HepG2 (cell line): ENCODE measurements at regions of chrX and their contacts with region 1.

Region 1: DNA sequence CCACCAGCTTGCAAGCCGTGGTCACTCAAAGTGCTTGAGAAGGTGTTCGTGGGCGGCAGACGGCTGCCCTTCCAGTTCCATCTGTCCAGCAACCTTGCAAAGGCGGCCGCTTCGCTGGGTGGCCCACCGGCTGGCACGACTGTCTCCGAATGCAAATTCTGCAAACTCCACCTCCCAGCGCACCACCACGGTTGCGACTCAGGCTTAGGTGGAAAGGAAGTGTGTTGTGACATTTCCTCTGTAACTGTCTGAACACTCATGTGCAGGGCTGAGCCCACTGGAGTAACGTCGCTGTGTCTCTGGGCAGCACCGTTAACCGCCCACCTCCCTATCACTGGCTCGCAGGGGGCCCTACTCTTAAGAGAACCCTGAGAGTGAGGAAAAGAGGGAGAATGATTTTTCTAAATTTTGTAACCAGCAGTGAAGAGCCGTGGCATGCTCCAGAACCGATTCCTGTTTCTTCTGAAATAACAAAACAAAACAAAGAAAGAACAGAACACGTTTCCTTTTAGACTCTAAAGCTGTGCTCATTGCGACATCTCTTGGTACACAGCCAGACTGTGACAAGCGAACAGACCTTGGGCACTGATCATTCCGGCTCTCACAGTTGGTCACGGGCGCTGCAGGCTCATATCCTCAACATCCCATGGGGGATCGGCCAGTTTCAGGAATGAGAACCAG is at the start of gene P2RY8:
- DNase-seq: peak; percentile 84
- ATAC-seq: peak; percentile 83
- H3K4me3 ChIP-seq: peak within 1 kb of the TSS; percentile 62 to 81 (median 63)
- H3K27ac ChIP-seq: peak within 1 kb of the TSS; percentile 75
- H3K4me1 ChIP-seq: peaks cover 51% of the 10 kb centered on the region
- H3K27me3 ChIP-seq: no peaks in the 10 kb centered on the region
- CTCF ChIP-seq: peak; percentile 56
- EP300 ChIP-seq: no peak
- POLR2A ChIP-seq: no peak
- RAD21 ChIP-seq: no peak
- total RNA-seq, gene P2RY8: 0.66 and 1.0 TPM in 2 replicates

Region 2: DNA sequence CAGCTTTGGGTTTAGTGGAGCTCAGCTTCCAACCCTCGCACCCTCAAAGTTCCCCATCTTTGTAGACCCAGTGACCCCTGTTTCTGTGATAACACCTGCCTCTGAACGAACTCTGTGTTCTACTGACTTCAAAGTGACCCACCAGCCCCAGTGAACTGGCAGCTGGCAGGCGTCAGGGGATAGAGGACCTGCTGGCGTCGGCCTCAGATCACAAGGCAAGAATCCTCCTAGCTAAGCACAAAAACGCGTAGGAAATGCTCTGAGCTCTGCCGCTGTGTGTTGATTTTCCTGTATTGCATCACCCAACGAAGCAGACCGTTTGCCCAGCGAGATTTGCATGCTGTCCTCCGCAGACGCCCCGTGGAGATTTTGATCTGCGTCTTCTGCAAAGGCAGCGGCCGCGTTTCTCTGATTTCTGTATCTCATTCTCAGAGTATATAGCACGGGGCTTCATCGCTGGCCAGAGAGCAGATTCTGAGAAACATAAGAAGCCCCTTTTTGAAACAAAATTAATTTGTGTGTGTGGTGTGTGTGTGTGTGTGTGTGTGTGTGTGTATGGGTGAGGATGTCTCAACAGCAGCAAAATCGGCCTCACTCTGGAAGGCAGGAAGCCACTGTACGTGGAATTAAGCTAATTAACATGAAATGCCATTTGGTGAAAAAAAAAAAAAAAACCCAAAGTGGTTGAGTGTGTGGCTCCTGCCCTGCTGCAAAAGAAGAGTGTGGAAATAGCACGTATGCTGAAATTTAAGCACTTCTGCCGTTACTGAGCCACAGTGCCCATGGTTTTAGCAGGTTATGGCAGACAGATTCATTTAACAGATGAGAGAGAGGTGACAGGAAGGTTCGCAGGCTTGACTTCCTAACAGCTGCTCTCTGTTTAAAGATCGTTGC is 55.3 kb before region 1 on chrX:
- CTCF ChIA-PET with region 1: no interaction called
- POLR2A ChIA-PET with region 1: no interaction called
- in situ Hi-C with region 1: no loop called
- intact Hi-C with region 1: loop called (anchors 1 kb)
- DNase-seq: peak; percentile 95
- ATAC-seq: peak; percentile 97
- H3K4me3 ChIP-seq: peak overlapping the region; percentile 46 to 56 (median 48)
- H3K27ac ChIP-seq: peak overlapping the region; percentile 60
- H3K4me1 ChIP-seq: peaks cover 30% of the 10 kb centered on the region
- H3K27me3 ChIP-seq: no peaks in the 10 kb centered on the region
- CTCF ChIP-seq: peak; percentile 34
- EP300 ChIP-seq: peak; percentile 43 to 83; a peak in 3 of 4 replicates
- POLR2A ChIP-seq: peak in 1 of 2 experiments; percentile 44; a peak in 1 of 4 replicates
- RAD21 ChIP-seq: no peak

Region 3: DNA sequence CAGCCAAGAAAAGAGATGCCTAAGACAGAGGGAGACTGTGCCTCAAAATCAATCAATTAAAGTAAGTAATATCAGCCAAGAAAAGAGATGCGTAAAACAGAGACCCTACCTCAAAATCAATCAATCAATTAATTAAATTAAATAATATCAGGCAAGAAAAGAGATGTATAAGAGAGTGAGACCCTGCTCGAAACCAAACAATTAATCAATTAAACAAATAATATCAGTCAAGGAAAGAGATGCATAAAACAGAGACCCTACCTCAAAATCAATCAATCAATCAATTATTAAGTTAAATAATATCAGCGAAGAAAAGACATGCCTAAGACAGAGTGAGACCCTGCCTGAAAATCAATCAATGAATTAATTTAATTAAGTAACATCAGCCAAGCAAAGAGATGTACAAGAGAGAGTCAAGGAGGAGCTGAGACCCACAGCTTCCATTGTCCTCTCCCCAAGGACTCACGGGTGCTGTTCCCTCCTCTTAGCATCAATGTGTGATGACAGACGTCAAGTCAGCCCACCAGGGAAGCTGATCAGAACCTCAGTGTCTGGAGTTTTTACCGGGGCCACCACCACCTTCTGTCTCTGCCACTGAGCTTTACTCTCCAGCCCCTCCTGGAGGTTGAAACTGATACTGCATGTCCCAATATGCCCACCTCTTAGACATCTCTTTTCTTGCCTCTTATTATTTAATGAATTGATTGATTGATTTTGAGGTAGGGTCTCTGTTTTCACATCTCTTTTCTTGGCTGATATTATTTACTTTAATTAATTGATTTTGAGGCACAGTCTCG is 43.8 kb after region 1 on chrX:
- CTCF ChIA-PET with region 1: no interaction called
- POLR2A ChIA-PET with region 1: no interaction called
- in situ Hi-C with region 1: no loop called
- intact Hi-C with region 1: loop called (anchors 10 kb)
- DNase-seq: peak; percentile 52
- ATAC-seq: peak; percentile 80
- H3K4me3 ChIP-seq: no peak overlapping the region
- H3K27ac ChIP-seq: no peak overlapping the region
- H3K4me1 ChIP-seq: peaks cover 8% of the 10 kb centered on the region
- H3K27me3 ChIP-seq: no peaks in the 10 kb centered on the region
- CTCF ChIP-seq: peak; percentile 75
- EP300 ChIP-seq: no peak
- POLR2A ChIP-seq: no peak
- RAD21 ChIP-seq: peak; percentile 58; the same call in 1 of the 2 replicates